PC-3 (cell line): ENCODE measurements at regions of chr7 and their contacts with region 1.

Region 1: DNA sequence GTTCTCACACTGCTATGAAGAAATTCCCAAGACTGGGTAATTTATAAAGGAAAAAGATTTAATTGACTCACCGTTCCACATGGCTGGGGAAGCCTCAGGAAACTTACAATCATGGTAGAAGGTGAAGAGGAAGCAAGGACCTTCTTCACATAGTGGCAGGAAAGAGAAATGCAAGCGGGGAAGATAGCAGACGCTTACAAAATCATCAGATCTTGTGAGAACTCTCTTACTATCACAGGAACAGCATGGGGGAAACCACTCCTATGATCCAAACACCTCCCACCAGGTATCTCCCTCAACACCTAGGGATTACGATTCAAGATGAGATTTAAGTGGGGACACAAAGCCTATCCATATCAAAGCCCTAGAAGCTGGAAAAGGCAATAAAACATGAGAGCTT is 130.8 kb downstream of the MDFIC start:
- DNase-seq: no peak
- ATAC-seq: no peak
- H3K4me3 ChIP-seq: no peak overlapping the region
- H3K27ac ChIP-seq: no peak overlapping the region
- H3K4me1 ChIP-seq: no peaks in the 10 kb centered on the region
- H3K27me3 ChIP-seq: no peaks in the 10 kb centered on the region
- CTCF ChIP-seq: no peak; the same call in 1 of the 2 replicates

Region 2: DNA sequence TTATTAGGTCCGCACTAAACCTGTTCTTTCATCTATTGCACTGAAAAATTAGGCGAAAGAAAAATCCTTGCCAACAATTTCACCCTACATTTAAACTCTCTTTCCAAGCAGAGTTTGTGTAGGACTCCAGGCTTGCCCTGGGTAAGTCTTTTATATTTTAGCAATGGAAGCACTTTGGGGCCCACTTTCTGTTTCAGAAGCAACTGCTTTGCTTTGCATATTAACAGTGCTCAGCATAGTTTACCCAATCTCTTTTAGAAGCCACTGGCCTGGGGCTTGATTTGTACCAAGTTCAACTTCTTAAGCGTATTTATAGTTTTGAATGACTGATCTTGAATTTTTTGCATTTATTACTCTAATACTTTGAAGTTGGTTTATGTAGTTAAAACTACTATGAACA is 209.6 kb before region 1 on chr7:
- CTCF ChIA-PET with region 1: no interaction called
- POLR2A ChIA-PET with region 1: no interaction called
- intact Hi-C with region 1: no loop called
- DNase-seq: no peak
- ATAC-seq: no peak
- H3K4me3 ChIP-seq: no peak overlapping the region
- H3K27ac ChIP-seq: no peak overlapping the region
- H3K4me1 ChIP-seq: no peaks in the 10 kb centered on the region
- H3K27me3 ChIP-seq: no peaks in the 10 kb centered on the region
- CTCF ChIP-seq: no peak

Region 3: DNA sequence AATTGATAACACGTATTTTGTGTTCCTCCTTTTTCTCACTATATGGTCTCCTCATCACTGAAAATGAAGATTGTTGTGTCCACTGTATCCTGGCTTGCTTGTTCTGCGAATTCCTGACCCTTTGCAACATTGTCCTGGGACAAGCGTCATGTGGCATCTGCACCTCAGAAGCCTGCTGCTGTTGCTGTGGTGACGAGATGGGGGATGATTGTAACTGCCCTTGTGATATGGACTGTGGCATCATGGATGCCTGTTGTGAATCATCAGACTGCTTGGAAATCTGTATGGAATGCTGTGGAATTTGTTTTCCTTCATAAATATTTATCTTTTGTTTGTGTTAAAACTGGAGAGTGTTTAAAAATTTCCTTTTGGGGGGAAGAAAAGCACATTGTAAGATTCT is 37.1 kb before region 1 on chr7:
- CTCF ChIA-PET with region 1: no interaction called
- POLR2A ChIA-PET with region 1: interaction called, 12 read pairs
- intact Hi-C with region 1: no loop called
- DNase-seq: no peak
- ATAC-seq: no peak
- H3K4me3 ChIP-seq: no peak overlapping the region
- H3K27ac ChIP-seq: no peak overlapping the region
- H3K4me1 ChIP-seq: no peaks in the 10 kb centered on the region
- H3K27me3 ChIP-seq: no peaks in the 10 kb centered on the region
- CTCF ChIP-seq: no peak

Region 4: DNA sequence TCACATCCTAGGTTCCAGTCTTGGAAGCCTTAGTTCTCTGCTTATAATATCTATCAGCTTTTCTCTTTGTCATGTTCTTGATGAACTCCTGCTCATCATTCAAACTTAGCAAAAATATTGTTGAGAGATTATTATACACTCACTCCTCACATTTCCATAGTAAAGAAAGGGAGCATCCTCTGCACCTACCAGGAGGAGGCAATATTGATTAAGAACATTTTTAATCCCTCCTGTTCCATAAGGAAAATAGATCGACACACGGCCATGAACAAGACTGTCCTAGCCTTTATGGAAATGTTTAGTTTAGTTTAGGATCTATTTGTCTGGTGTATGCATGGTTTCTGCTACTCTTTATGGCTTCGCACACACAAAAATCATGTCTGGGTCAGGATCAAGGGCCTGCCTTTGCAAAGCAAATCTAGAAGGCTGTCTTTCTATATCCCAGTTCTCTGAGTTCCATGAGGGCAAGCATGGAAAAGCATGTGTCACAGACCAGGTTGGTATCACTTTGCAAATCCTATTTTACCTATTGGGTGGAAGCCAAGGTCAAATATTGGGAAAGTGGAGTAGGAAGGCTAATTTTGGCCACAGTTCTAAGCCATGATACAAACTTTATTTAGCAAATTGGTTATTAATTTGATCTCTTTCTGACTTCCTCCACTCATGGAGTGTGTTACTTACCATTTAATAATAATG is 33.6 kb after region 1 on chr7:
- CTCF ChIA-PET with region 1: no interaction called
- POLR2A ChIA-PET with region 1: no interaction called
- intact Hi-C with region 1: no loop called
- DNase-seq: peak; percentile 12
- ATAC-seq: no peak
- H3K4me3 ChIP-seq: no peak overlapping the region
- H3K27ac ChIP-seq: no peak overlapping the region
- H3K4me1 ChIP-seq: peaks cover 33% of the 10 kb centered on the region
- H3K27me3 ChIP-seq: no peaks in the 10 kb centered on the region
- CTCF ChIP-seq: peak; percentile 41

Region 5: GRCh38 chr7:115099906-115100305 is 47.2 kb after region 1 on chr7:
- CTCF ChIA-PET with region 1: no interaction called
- POLR2A ChIA-PET with region 1: no interaction called
- intact Hi-C with region 1: no loop called
- DNase-seq: peak; percentile 71
- ATAC-seq: peak; percentile 91
- H3K4me3 ChIP-seq: no peak overlapping the region
- H3K27ac ChIP-seq: peak overlapping the region; percentile 17; the same call in 1 of the 2 replicates
- H3K4me1 ChIP-seq: peaks cover 30% of the 10 kb centered on the region
- H3K27me3 ChIP-seq: no peaks in the 10 kb centered on the region
- CTCF ChIP-seq: no peak

Region 6: DNA sequence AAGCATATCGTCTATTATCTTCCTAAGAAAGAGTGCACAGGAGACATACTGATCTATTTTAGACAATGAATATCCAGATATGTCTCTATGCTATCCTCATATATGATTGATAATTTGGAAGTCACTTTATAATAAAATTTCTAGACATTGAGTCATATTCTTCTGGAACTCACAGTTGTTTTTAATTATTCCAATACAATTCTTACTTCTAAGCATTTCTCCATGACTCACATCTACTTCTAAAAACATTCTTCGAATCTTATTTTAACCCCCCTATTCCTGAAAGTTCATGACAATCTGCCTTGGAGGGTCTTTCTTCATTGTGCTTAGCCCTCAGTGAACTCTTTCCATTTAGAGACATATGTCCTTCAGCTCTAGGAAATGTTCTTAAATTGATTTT is 237.3 kb after region 1 on chr7:
- CTCF ChIA-PET with region 1: no interaction called
- POLR2A ChIA-PET with region 1: no interaction called
- intact Hi-C with region 1: no loop called
- DNase-seq: no peak
- ATAC-seq: no peak
- H3K4me3 ChIP-seq: no peak overlapping the region
- H3K27ac ChIP-seq: no peak overlapping the region
- H3K4me1 ChIP-seq: no peaks in the 10 kb centered on the region
- H3K27me3 ChIP-seq: no peaks in the 10 kb centered on the region
- CTCF ChIP-seq: no peak